Right ventricle myocardium superior (tissue), 1 donor: ENCODE measurements at regions of chr12 and their contacts with region 1.

Region 1: DNA sequence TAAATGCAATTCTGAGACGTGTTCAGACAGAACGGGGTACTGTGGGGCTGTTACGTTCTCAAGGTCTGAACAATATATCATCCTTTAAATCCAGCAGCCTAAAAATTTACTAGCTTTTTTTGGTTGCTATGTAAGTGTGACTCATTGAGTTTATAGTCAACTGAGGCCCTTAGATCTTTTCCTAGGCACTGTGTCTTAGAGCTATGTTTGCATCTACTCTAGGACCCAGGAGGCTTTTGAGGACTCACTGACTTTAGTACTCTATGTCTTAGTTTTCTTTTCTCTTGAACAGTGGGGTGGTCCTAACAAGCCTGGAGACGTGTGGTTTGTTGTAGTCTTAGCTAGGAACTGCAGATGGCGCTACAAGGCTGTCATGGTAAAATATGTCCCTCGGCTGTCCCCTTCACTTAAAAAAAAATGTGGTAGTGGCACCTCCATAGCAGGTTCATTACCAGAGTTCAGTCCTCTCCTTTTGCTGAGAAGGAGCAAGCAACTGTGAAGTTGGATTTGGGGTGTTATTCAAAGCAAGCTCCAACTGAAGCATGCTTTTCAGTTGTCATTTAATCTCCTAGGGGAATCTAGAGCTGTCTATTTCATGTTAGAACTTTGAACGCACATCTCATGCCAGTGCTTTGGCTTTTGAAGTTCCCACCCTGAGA is 8.7 kb upstream of the SPATS2 start:
- DNase-seq: no peak
- ATAC-seq: peak; percentile 92

Region 2: DNA sequence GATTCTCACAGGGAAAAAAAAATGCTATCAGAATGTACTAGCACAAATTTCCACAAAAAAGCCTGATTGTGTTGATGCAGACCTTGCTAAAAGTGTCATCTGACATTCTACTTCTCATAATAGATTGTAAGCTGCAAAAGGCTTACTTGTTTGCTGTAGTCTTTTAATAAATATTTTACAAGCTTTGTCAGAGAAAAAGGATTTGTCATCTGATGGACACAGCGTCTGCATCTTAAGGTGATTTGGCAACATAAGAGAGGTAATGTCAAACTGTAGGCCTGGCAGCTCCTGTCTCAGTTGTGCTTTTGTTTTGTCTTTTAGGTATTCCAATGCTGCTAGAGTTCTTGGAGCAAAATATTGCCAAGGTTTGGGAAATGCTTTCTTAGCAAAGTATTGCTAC is 153.9 kb after region 1 on chr12:
- intact Hi-C with region 1: loop called (anchors 2 kb)
- DNase-seq: no peak
- ATAC-seq: no peak